Mammary epithelial cell (primary cell): ENCODE measurements at regions of chr4 and their contacts with region 1.

Region 1: GRCh38 chr4:128809477-128810330 is at the start of gene JADE1:
- DNase-seq: peak; percentile 91
- H3K4me3 ChIP-seq: peak within 1 kb of the TSS; percentile 86 to 100 (median 88)
- H3K27ac ChIP-seq: peak within 1 kb of the TSS; percentile 71
- H3K4me1 ChIP-seq: peaks cover 6% of the 10 kb centered on the region
- H3K27me3 ChIP-seq: no peaks in the 10 kb centered on the region
- CTCF ChIP-seq: peak; percentile 33 to 81
- total RNA-seq, gene JADE1: 5.0 to 6.0 TPM

Region 2: GRCh38 chr4:128060699-128061565 is 748.8 kb before region 1 on chr4 and contains the start of gene LARP1B:
- CTCF ChIA-PET with region 1: no interaction called
- dilution Hi-C with region 1: no loop called
- in situ Hi-C with region 1: no loop called
- intact Hi-C with region 1: loop called (anchors 2 kb)
- DNase-seq: peak; percentile 98
- H3K4me3 ChIP-seq: peak within 1 kb of the TSS; percentile 81 to 97 (median 97)
- H3K27ac ChIP-seq: peak within 1 kb of the TSS; percentile 90
- H3K4me1 ChIP-seq: no peaks in the 10 kb centered on the region
- H3K27me3 ChIP-seq: no peaks in the 10 kb centered on the region
- CTCF ChIP-seq: no peak
- total RNA-seq, gene LARP1B: 15.3 to 27.0 TPM

Region 3: GRCh38 chr4:128287871-128288688 is 521.6 kb before region 1 on chr4:
- CTCF ChIA-PET with region 1: no interaction called
- dilution Hi-C with region 1: no loop called
- in situ Hi-C with region 1: no loop called
- intact Hi-C with region 1: loop called (anchors 2 kb)
- DNase-seq: peak; percentile 99
- H3K4me3 ChIP-seq: peak overlapping the region; percentile 55 to 84 (median 62)
- H3K27ac ChIP-seq: peak overlapping the region; percentile 86
- H3K4me1 ChIP-seq: peaks cover 7% of the 10 kb centered on the region
- H3K27me3 ChIP-seq: no peaks in the 10 kb centered on the region
- CTCF ChIP-seq: peak in 1 of 2 donors; percentile 38

Region 4: GRCh38 chr4:128427832-128428366 is 381.8 kb before region 1 on chr4:
- CTCF ChIA-PET with region 1: no interaction called
- dilution Hi-C with region 1: no loop called
- in situ Hi-C with region 1: no loop called
- intact Hi-C with region 1: loop called (anchors 1 kb)
- DNase-seq: peak; percentile 81
- H3K4me3 ChIP-seq: peak overlapping the region in 2 of 3 experiments; percentile 8 to 49
- H3K27ac ChIP-seq: peak overlapping the region; percentile 19
- H3K4me1 ChIP-seq: peaks cover 20% of the 10 kb centered on the region
- H3K27me3 ChIP-seq: no peaks in the 10 kb centered on the region
- CTCF ChIP-seq: peak; percentile 63 to 72

Region 5: DNA sequence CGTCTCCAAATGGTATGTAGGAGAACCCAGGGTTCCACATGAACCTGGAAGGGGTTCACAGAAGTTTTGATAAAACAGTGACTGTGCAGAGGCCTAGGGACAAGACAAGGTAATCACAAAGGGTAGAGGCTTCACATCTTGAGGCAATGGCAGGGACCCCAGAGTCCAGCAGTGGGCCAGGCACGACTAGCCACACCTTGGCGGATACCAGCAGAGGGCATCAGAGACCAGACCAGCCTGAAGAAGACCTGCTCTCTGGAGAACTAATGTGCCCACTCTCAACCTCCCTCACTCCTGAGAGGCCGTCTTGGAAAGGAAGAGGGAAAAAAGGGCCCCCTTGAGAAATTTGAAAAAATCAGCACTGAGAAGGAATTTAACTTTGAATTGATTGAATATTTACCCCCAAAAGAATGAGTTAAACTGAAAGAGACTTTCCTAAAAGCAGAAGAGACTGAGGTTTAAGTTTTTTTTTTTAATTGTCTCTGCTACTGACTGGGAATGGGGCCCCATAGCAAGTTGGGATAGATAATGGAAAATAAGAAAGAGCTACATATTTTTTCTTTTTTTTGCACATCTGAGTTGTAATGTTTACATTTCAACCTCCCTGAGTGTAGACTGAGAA is 244.0 kb before region 1 on chr4:
- CTCF ChIA-PET with region 1: no interaction called
- dilution Hi-C with region 1: no loop called
- in situ Hi-C with region 1: loop called (anchors 5 to 10 kb)
- intact Hi-C with region 1: loop called (anchors 1 kb)
- DNase-seq: no peak
- H3K4me3 ChIP-seq: no peak overlapping the region
- H3K27ac ChIP-seq: no peak overlapping the region
- H3K4me1 ChIP-seq: peaks cover 6% of the 10 kb centered on the region
- H3K27me3 ChIP-seq: no peaks in the 10 kb centered on the region
- CTCF ChIP-seq: peak; percentile 37 to 70

Region 6: DNA sequence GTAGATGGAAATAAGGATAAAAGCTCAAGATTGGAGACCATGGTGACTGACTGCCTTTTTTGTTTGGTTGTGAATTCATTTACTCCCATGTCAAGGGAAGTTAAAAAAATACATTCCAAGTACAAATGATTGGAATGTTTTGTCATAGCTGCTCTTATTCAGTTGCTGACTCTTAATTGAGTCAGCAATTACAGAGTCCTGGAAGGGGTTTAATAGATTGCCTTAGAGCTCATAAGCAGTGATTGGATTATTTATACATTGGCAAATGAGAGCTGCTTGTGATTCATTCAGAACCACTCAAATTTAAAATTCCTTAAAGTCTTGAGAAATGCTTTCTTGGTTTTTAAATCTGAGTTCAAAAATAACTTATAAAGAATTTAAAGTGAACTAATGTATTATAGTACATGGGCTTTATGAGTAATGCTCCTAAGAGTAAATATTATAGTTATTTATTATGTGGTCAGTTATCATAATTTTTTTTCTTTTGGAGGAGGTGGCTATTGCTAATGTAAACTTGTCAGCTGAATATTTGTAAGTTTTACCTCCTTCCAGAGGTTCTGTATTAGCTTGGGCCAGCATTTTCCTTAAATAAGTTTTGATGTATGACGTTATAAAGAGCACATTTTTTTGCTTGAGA is 13.4 kb after region 1 on chr4:
- CTCF ChIA-PET with region 1: interaction called, 5 read pairs
- dilution Hi-C with region 1: no loop called
- in situ Hi-C with region 1: no loop called
- intact Hi-C with region 1: loop called (anchors 1 kb)
- DNase-seq: peak; percentile 83
- H3K4me3 ChIP-seq: no peak overlapping the region
- H3K27ac ChIP-seq: peak overlapping the region; percentile 40
- H3K4me1 ChIP-seq: peaks cover 18% of the 10 kb centered on the region
- H3K27me3 ChIP-seq: no peaks in the 10 kb centered on the region
- CTCF ChIP-seq: no peak

Region 7: GRCh38 chr4:129093191-129093920 is 283.7 kb after region 1 on chr4 and contains the start of gene SCLT1:
- CTCF ChIA-PET with region 1: no interaction called
- dilution Hi-C with region 1: no loop called
- in situ Hi-C with region 1: no loop called
- intact Hi-C with region 1: loop called (anchors 1 kb)
- DNase-seq: peak; percentile 98
- H3K4me3 ChIP-seq: peak within 1 kb of the TSS; percentile 51 to 77 (median 69)
- H3K27ac ChIP-seq: peak within 1 kb of the TSS; percentile 82
- H3K4me1 ChIP-seq: peaks cover 19% of the 10 kb centered on the region
- H3K27me3 ChIP-seq: no peaks in the 10 kb centered on the region
- CTCF ChIP-seq: no peak
- total RNA-seq, gene SCLT1: 7.2 to 13.3 TPM